T-cell (primary cell): ENCODE measurements at regions of chr11 and their contacts with region 1.

Region 1: GRCh38 chr11:117083011-117083935 is 15.0 kb downstream of the SIK3 start:
- DNase-seq: no peak
- ATAC-seq: no peak
- H3K4me3 ChIP-seq: no peak overlapping the region
- H3K4me3 Mint-ChIP-seq: no peak overlapping the region
- H3K27ac ChIP-seq: no peak overlapping the region
- H3K27ac Mint-ChIP-seq: no peak overlapping the region
- H3K4me1 ChIP-seq: peaks cover 4 to 25% of the 10 kb centered on the region in 2 experiments
- H3K4me1 Mint-ChIP-seq: peaks cover 73 to 80% (median 74%) of the 10 kb centered on the region in 3 donors
- H3K27me3 ChIP-seq: no peaks in the 10 kb centered on the region
- H3K27me3 Mint-ChIP-seq: no peaks in the 10 kb centered on the region

Region 2: GRCh38 chr11:117045196-117045595 is 38.1 kb before region 1 on chr11:
- CTCF ChIA-PET with region 1: no interaction called
- POLR2A ChIA-PET with region 1: interaction called, 9 to 25 read pairs
- DNase-seq: no peak
- ATAC-seq: no peak
- H3K4me3 ChIP-seq: no peak overlapping the region
- H3K4me3 Mint-ChIP-seq: no peak overlapping the region
- H3K27ac ChIP-seq: no peak overlapping the region
- H3K27ac Mint-ChIP-seq: peak overlapping the region in 1 of 2 donors; percentile 1
- H3K4me1 ChIP-seq: peaks cover 0 to 5% of the 10 kb centered on the region in 2 experiments
- H3K4me1 Mint-ChIP-seq: peaks cover 63 to 74% (median 69%) of the 10 kb centered on the region in 3 donors
- H3K27me3 ChIP-seq: no peaks in the 10 kb centered on the region
- H3K27me3 Mint-ChIP-seq: no peaks in the 10 kb centered on the region

Region 3: DNA sequence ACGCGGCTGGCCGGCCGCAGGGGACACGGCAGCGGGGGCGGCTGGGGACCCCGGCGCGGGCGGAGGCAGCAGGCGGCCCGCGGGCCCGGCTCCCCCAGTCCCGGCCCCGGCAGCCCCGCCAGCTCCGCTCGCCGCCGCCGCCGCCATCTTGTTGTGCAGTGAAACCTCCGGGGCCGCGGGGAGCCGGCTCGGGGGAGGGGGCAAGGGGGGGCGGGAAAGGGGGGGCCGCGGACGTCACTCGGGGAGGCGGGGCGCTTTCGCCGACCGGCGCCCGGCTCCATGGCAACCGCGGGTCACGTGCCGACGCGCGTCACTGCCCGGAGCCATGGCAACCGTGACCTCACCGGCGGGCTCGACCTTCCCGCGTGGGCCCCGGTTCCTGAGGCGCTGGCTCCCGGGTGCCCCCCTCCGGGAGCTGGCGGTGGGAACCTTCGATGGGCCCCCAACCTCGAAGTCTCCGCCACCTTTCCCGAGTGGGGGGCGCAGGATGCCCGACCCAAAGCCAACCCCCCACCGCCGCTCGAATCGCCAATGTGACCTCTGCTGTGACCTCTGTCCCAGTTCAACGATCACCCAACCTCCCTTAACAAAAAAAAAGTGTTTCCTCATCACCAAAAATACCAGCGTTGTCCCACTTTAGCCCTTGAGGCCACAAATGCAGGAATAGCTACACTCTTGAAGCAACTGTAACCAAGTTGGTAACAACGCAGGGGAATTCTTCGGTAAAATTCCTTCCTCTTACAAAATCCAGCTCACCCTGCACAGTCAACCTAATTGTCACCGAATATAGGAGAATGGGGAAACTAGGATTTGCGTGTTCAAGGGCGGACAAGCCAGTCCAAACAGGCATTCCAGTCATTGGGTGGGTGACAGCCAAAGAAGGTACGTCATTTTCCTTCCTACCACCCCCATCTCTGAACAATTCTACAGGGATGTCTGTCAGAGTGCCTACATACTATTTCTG is 15.3 kb after region 1 on chr11 and contains the start of gene SIK3:
- CTCF ChIA-PET with region 1: no interaction called
- POLR2A ChIA-PET with region 1: interaction called, 4 to 13 read pairs
- DNase-seq: peak; percentile 84 to 98 (median 91)
- ATAC-seq: peak; percentile 80 to 87 (median 82)
- H3K4me3 ChIP-seq: peak within 1 kb of the TSS; percentile 77 to 83
- H3K4me3 Mint-ChIP-seq: peak within 1 kb of the TSS; percentile 86 to 98 (median 95)
- H3K27ac ChIP-seq: peak within 1 kb of the TSS; percentile 99
- H3K27ac Mint-ChIP-seq: peak within 1 kb of the TSS; percentile 95 to 98
- H3K4me1 ChIP-seq: peaks cover 27 to 38% of the 10 kb centered on the region in 2 experiments
- H3K4me1 Mint-ChIP-seq: peaks cover 46 to 58% (median 54%) of the 10 kb centered on the region in 3 donors
- H3K27me3 ChIP-seq: no peaks in the 10 kb centered on the region
- H3K27me3 Mint-ChIP-seq: no peaks in the 10 kb centered on the region
- total RNA-seq, gene SIK3: 56.3 to 78.0 (median 63.8) TPM